H1 (cell line): ENCODE measurements at regions of chr17 and their contacts with region 1.

Region 1: GRCh38 chr17:45828628-45829027 is 16.1 kb upstream of the SPPL2C start:
- DNase-seq: no peak
- H3K4me3 ChIP-seq: no peak overlapping the region
- H3K27ac ChIP-seq: no peak overlapping the region
- H3K4me1 ChIP-seq: peaks cover 0 to 2% (median 0%) of the 10 kb centered on the region in 4 experiments; a peak in 1 of 7 replicates
- H3K27me3 ChIP-seq: no peaks in the 10 kb centered on the region; a peak in 1 of 7 replicates
- CTCF ChIP-seq: no peak
- EP300 ChIP-seq: no peak
- POLR2A ChIP-seq: no peak
- RAD21 ChIP-seq: peak in 1 of 2 experiments; percentile 22; a peak in 1 of 4 replicates

Region 2: DNA sequence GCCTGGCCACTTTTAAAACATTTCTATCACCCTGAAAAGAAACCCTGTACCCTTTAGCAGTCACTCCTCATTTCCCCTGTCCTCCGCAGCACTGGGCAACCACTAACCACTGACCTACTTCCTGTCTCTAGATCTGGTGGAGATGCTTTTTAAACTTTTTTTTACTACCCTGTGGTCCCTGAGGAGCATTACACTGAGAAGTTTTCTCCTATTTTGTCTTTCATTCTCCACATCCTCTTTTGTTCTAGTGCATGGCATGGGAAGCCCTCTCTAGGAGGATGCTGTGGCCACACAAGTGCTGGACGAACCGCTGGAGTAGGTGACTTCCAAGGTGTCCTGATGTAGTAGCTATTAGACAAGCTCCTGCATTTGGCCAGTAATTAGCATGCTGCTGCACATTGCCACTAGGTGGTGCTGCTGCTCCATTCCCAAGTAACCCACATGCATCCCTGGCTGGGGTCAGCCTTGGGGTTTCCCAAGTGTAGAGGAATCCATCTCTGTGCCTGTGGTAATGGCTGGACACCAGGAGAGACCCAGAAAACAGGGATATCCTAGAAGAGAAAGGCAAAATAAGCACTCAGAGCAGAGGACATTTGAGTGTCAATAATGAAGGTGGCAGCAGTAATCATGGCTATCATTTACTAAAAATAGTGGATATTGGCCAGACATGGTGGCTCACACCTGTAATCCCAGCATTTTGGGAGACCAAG is 188.3 kb before region 1 on chr17:
- CTCF ChIA-PET with region 1: interaction called, 45 read pairs
- POLR2A ChIA-PET with region 1: interaction called, 3 read pairs
- DNase-seq: peak; percentile 57 to 89
- H3K4me3 ChIP-seq: no peak overlapping the region
- H3K27ac ChIP-seq: no peak overlapping the region
- H3K4me1 ChIP-seq: no peaks in the 10 kb centered on the region; a peak in 1 of 7 replicates
- H3K27me3 ChIP-seq: no peaks in the 10 kb centered on the region
- CTCF ChIP-seq: peak; percentile 93 to 99 (median 94)
- EP300 ChIP-seq: no peak
- POLR2A ChIP-seq: no peak
- RAD21 ChIP-seq: peak; percentile 97 to 98

Region 3: DNA sequence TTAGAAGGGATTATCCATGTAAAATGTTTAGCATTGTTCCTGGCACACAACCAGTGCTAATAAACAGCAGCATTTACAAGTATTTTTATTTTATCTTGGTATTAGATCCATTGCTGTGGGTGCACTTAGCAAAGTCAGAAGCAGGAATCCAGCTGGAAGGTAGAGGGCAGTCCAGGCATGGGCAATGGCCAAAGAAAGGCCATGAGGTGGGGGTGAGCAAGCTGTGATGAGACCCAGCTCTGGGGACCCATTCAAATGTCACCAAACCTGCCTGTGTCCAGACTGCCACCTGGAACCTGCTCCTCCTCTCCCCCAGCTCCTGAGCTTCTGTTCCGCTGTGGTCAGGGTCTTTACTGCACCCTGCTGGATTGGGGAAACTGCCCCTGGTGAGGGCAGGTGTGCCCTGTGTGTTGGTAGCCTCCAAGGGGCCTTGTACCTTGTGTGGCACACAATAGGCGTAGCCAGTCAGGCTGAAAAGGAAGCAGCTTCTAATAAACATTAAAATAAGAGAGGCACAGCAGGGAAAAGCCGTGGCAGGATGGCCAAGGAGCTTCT is 162.5 kb before region 1 on chr17:
- CTCF ChIA-PET with region 1: interaction called, 54 read pairs
- POLR2A ChIA-PET with region 1: no interaction called
- DNase-seq: no peak
- H3K4me3 ChIP-seq: no peak overlapping the region
- H3K27ac ChIP-seq: no peak overlapping the region
- H3K4me1 ChIP-seq: no peaks in the 10 kb centered on the region
- H3K27me3 ChIP-seq: no peaks in the 10 kb centered on the region; a peak in 3 of 7 replicates
- CTCF ChIP-seq: peak; percentile 54 to 65 (median 54)
- EP300 ChIP-seq: no peak
- POLR2A ChIP-seq: no peak
- RAD21 ChIP-seq: peak; percentile 78

Region 4: GRCh38 chr17:45782889-45783592 is 45.6 kb before region 1 on chr17:
- CTCF ChIA-PET with region 1: interaction called, 69 read pairs
- POLR2A ChIA-PET with region 1: interaction called, 3 read pairs
- DNase-seq: peak in 1 of 2 experiments; percentile 93
- H3K4me3 ChIP-seq: peak overlapping the region; percentile 48 to 96 (median 76)
- H3K27ac ChIP-seq: no peak overlapping the region
- H3K4me1 ChIP-seq: peaks cover 0 to 19% (median 6%) of the 10 kb centered on the region in 4 experiments; a peak in 6 of 7 replicates
- H3K27me3 ChIP-seq: peaks cover 12 to 57% (median 49%) of the 10 kb centered on the region in 4 experiments
- CTCF ChIP-seq: peak; percentile 81 to 90 (median 87)
- EP300 ChIP-seq: no peak
- POLR2A ChIP-seq: no peak
- RAD21 ChIP-seq: peak; percentile 48 to 67; a peak in 3 of 4 replicates

Region 5: DNA sequence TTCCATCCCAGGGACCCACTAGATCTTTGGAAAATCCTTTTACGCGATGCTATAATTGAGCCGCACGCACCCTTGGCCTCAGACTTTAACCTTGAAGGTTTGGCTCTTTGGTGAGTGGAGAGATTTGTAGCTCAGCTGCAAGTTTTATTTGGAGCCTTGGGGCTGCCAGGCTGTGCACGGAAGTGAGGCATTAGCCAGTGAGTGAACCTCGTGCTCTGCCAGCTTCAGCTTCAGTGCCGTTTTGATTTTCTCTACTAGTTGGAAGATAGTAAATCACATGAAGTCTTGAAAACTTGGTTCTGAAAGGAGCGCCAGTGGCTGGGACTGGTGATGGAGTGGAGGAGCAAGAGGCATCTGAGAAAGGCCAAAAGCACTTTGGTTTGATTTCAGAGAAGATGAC is 27.2 kb before region 1 on chr17:
- CTCF ChIA-PET with region 1: interaction called, 14 read pairs
- POLR2A ChIA-PET with region 1: no interaction called
- DNase-seq: no peak
- H3K4me3 ChIP-seq: no peak overlapping the region
- H3K27ac ChIP-seq: no peak overlapping the region
- H3K4me1 ChIP-seq: peaks cover 0 to 6% (median 2%) of the 10 kb centered on the region in 4 experiments; a peak in 4 of 7 replicates
- H3K27me3 ChIP-seq: peaks cover 0 to 12% (median 1%) of the 10 kb centered on the region in 4 experiments; a peak in 3 of 7 replicates
- CTCF ChIP-seq: no peak
- EP300 ChIP-seq: no peak
- POLR2A ChIP-seq: no peak
- RAD21 ChIP-seq: no peak

Region 6: DNA sequence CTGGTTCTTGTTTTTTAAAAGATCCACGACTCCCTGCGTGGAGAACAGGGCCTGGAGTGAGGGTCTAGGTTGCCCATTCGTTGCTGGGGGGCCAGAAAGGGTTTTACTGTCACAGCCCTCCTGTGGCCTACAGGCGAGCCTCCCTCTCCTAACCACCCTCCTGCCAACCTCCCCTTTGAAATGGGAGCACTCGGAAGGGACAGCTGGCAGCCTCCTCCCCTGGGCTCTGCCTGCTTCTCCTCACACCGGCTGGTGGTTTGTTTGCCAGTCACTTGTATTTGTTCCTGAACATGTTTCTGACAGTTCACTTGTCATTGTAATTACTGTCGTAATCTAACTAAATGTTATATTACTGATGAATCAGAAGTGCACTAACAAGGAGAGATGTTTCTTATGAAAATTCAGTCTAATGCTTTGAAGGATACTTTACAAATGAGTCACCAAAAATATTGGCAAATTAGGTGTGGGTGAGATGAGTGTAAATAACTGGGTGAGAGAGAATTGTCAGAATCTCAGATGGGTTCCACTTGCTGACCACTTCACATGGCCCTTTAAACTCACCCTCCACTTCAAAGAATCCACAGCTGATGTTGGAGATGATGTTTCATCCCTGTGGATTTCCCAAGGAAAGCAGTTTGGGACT is 13.4 kb after region 1 on chr17:
- CTCF ChIA-PET with region 1: interaction called, 137 read pairs
- POLR2A ChIA-PET with region 1: interaction called, 4 read pairs
- DNase-seq: no peak
- H3K4me3 ChIP-seq: no peak overlapping the region
- H3K27ac ChIP-seq: no peak overlapping the region
- H3K4me1 ChIP-seq: peaks cover 0 to 2% (median under 1%) of the 10 kb centered on the region in 4 experiments; a peak in 2 of 7 replicates
- H3K27me3 ChIP-seq: no peaks in the 10 kb centered on the region
- CTCF ChIP-seq: no peak
- EP300 ChIP-seq: no peak
- POLR2A ChIP-seq: no peak
- RAD21 ChIP-seq: no peak

Region 7: GRCh38 chr17:45990886-45991285 is 162.3 kb after region 1 on chr17:
- CTCF ChIA-PET with region 1: no interaction called
- POLR2A ChIA-PET with region 1: no interaction called
- DNase-seq: no peak
- H3K4me3 ChIP-seq: no peak overlapping the region
- H3K27ac ChIP-seq: no peak overlapping the region
- H3K4me1 ChIP-seq: peaks cover 0 to 9% (median 4%) of the 10 kb centered on the region in 4 experiments; a peak in 5 of 7 replicates
- H3K27me3 ChIP-seq: peaks cover 0 to 2% (median 0%) of the 10 kb centered on the region in 4 experiments; a peak in 1 of 7 replicates
- CTCF ChIP-seq: peak in 1 of 3 experiments; percentile 32; a peak in 1 of 4 replicates
- EP300 ChIP-seq: no peak
- POLR2A ChIP-seq: no peak
- RAD21 ChIP-seq: no peak